ENCODE measurements at regions of chr20 and their contacts with region 1.

Region 1: DNA sequence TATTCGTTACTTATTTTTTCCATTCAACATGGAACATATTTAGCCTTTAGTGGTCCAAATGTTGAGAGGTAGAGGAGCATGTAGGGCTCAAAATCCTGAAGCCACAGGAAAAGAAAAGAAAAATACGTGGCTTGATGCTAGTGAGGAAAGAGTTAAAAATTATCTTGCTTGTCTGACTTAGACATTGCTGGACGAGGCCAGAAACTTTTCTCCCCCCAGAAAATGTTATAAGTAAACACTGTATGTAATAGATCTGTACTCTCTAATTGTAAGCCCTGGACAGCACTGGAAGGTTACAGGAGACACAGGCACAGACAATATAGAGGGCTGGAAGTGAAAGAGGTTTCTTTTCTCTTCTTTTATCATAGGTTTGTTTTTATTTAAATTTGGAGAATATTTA is 165.6 kb downstream of the ZFP64 start:
- DNase-seq: no peak
- ATAC-seq: no peak
- H3K4me3 ChIP-seq: no peak overlapping the region
- H3K27ac ChIP-seq: no peak overlapping the region
- H3K4me1 ChIP-seq: no peaks in the 10 kb centered on the region
- H3K27me3 ChIP-seq: no peaks in the 10 kb centered on the region
- CTCF ChIP-seq: no peak

Region 2: DNA sequence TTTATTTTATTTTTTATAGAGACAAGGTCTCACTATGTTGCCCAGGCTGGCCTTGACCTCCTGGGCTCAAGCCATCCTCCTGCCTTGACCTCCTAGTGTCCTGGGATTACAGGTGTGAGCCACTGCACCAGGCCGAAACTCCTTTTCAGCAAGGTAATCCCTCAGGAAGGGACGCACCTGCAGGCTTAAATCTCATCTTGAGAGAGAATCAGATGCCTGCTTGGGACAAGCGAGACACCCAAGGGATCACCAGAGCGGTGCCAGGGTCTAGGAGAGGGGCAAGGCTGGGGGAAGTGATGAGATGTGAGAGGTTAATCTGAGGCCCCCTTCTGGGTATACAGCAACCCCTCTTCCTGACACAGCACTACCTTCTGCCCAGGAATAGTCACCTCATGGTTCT is 253.7 kb before region 1 on chr20:
- CTCF ChIA-PET with region 1: no interaction called
- POLR2A ChIA-PET with region 1: no interaction called
- in situ Hi-C with region 1: no loop called
- intact Hi-C with region 1: no loop called
- DNase-seq: no peak
- ATAC-seq: no peak
- H3K4me3 ChIP-seq: no peak overlapping the region
- H3K27ac ChIP-seq: no peak overlapping the region
- H3K4me1 ChIP-seq: 0 out of 2 replicates have a peak, but pooled peaks cover 2% of the 10 kb centered on the region
- H3K27me3 ChIP-seq: no peaks in the 10 kb centered on the region
- CTCF ChIP-seq: no peak

Region 3: DNA sequence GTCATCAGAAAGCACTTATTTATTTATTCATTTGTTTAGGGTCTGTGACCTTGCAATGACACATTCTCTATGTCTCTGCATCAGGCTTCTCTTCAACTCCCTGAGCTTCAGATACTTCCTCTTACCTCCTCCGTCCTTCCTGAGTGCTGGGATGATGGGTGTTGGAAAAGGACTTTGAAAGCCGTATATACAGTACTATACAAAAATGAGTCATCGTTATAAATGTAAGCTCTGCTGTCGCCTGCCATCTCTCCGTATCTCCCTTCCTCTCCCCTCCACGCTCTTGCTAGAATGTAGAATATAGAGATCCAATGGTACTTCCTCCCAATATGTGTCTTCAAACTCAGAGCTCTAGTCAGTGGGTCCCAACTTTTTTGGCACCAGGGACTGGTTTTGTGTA is 131.7 kb before region 1 on chr20:
- CTCF ChIA-PET with region 1: no interaction called
- POLR2A ChIA-PET with region 1: interaction called, 15 read pairs
- in situ Hi-C with region 1: no loop called
- intact Hi-C with region 1: no loop called
- DNase-seq: no peak
- ATAC-seq: no peak
- H3K4me3 ChIP-seq: no peak overlapping the region
- H3K27ac ChIP-seq: peak overlapping the region; percentile 51; the same call in 1 of the 2 replicates
- H3K4me1 ChIP-seq: peaks cover 5% of the 10 kb centered on the region
- H3K27me3 ChIP-seq: no peaks in the 10 kb centered on the region
- CTCF ChIP-seq: no peak

Region 4: GRCh38 chr20:51999254-51999896 is 26.6 kb before region 1 on chr20:
- CTCF ChIA-PET with region 1: no interaction called
- POLR2A ChIA-PET with region 1: no interaction called
- in situ Hi-C with region 1: no loop called
- intact Hi-C with region 1: no loop called
- DNase-seq: no peak
- ATAC-seq: no peak
- H3K4me3 ChIP-seq: no peak overlapping the region
- H3K27ac ChIP-seq: no peak overlapping the region
- H3K4me1 ChIP-seq: no peaks in the 10 kb centered on the region; the same call in 1 of the 2 replicates
- H3K27me3 ChIP-seq: peaks cover 2% of the 10 kb centered on the region; the same call in 1 of the 2 replicates
- CTCF ChIP-seq: no peak

Region 5: GRCh38 chr20:52047811-52048764 is 22.1 kb after region 1 on chr20:
- CTCF ChIA-PET with region 1: no interaction called
- POLR2A ChIA-PET with region 1: no interaction called
- in situ Hi-C with region 1: no loop called
- intact Hi-C with region 1: no loop called
- DNase-seq: no peak
- ATAC-seq: no peak
- H3K4me3 ChIP-seq: no peak overlapping the region
- H3K27ac ChIP-seq: no peak overlapping the region
- H3K4me1 ChIP-seq: no peaks in the 10 kb centered on the region
- H3K27me3 ChIP-seq: no peaks in the 10 kb centered on the region
- CTCF ChIP-seq: no peak

Region 6: GRCh38 chr20:52145587-52145986 is 119.6 kb after region 1 on chr20:
- CTCF ChIA-PET with region 1: no interaction called
- POLR2A ChIA-PET with region 1: interaction called, 14 read pairs
- in situ Hi-C with region 1: no loop called
- intact Hi-C with region 1: no loop called
- DNase-seq: no peak
- ATAC-seq: no peak
- H3K4me3 ChIP-seq: no peak overlapping the region
- H3K27ac ChIP-seq: no peak overlapping the region
- H3K4me1 ChIP-seq: no peaks in the 10 kb centered on the region
- H3K27me3 ChIP-seq: no peaks in the 10 kb centered on the region
- CTCF ChIP-seq: no peak